ENCODE measurements at regions of chr19 and their contacts with region 1.

Region 1: GRCh38 chr19:50777754-50778303 is 7.6 kb downstream of the GPR32 start:
- DNase-seq: no peak
- H3K4me3 Mint-ChIP-seq: no peak overlapping the region
- H3K27ac Mint-ChIP-seq: no peak overlapping the region
- H3K4me1 Mint-ChIP-seq: peaks cover 3% of the 10 kb centered on the region
- H3K27me3 Mint-ChIP-seq: peaks cover 57% of the 10 kb centered on the region

Region 2: GRCh38 chr19:49786376-49786820 is 991.4 kb before region 1 on chr19:
- CTCF ChIA-PET with region 1: no interaction called
- intact Hi-C with region 1: no loop called
- DNase-seq: no peak
- H3K4me3 Mint-ChIP-seq: no peak overlapping the region
- H3K27ac Mint-ChIP-seq: no peak overlapping the region
- H3K4me1 Mint-ChIP-seq: no peaks in the 10 kb centered on the region
- H3K27me3 Mint-ChIP-seq: no peaks in the 10 kb centered on the region

Region 3: GRCh38 chr19:50368649-50369570 is 408.9 kb before region 1 on chr19:
- CTCF ChIA-PET with region 1: no interaction called
- intact Hi-C with region 1: loop called (anchors 1 kb)
- DNase-seq: peak; percentile 89
- H3K4me3 Mint-ChIP-seq: peak overlapping the region; percentile 88
- H3K27ac Mint-ChIP-seq: peak overlapping the region; percentile 88
- H3K4me1 Mint-ChIP-seq: peaks cover 35% of the 10 kb centered on the region
- H3K27me3 Mint-ChIP-seq: no peaks in the 10 kb centered on the region

Region 4: DNA sequence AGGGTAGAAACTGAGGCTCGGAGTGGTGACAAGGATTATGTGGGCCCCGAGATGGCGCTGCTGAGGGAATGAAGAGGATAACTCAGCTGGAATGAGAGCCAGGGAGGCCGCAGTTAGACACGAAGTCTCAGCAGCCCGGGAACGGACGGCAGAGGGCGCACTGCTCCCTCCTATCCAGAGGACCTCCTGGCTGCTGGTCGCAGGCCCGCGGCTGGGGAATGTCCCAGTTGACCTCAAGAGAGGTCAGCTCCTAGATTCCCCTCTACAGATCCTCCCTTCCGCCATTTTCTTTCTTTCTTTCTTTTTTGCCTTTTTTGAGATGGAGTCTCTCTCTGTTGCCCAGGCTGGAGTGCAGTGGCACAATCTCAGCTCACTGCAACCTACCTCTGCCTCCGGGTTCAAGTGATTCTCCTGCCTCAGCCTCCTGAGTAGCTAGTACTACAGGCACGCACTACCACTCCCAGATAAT is 240.0 kb before region 1 on chr19:
- CTCF ChIA-PET with region 1: interaction called, 13 read pairs
- intact Hi-C with region 1: loop called (anchors 1 kb)
- DNase-seq: peak; percentile 84
- H3K4me3 Mint-ChIP-seq: no peak overlapping the region
- H3K27ac Mint-ChIP-seq: peak overlapping the region; percentile 61
- H3K4me1 Mint-ChIP-seq: peaks cover 5% of the 10 kb centered on the region
- H3K27me3 Mint-ChIP-seq: peaks cover 15% of the 10 kb centered on the region

Region 5: DNA sequence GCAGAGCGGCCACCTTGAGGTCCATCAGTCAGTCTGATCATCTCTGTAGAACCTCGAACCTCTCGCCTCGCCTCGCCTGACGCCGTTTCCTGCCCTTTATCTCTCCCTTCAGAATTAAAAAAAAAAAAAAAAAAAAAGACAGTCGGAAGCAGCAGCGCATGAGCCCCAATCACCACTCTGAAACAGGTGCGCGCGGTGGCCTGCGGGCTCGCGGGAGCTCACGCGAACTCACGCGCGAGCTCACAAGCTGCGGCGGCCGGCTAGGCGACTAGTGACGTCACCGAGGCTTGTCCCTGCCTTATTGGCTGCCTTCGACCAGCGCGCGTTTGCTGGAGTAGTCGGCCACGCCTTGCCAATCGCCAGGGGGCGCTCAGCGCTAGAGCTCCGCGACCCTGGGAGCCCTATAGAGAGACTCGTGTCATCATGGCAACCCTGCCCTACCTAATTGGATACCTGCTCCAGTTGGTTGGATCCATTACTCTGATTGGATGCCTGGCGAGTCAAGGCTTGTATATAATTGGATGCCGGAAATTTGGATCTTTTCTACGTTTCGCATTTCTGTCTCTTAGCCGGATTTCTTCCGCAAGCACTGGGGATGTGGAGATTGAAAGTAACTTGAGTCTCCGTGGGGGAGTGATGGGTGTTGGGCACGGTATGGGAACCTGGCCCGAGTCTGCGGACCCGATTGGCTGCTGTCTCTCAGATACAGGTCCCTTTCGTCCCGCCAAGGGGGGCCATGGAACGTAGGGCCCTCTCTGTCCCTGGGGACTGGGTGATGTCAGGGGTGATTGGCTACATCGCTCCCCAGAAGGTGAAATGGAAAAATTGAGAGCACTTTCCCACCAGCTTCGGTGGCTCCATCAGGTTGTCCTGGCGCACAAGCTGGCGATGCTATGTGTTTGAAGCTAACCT is 169.7 kb before region 1 on chr19:
- CTCF ChIA-PET with region 1: no interaction called
- intact Hi-C with region 1: loop called (anchors 2 kb)
- DNase-seq: peak; percentile 91
- H3K4me3 Mint-ChIP-seq: no peak overlapping the region
- H3K27ac Mint-ChIP-seq: no peak overlapping the region
- H3K4me1 Mint-ChIP-seq: peaks cover 10% of the 10 kb centered on the region
- H3K27me3 Mint-ChIP-seq: peaks cover 32% of the 10 kb centered on the region

Region 6: DNA sequence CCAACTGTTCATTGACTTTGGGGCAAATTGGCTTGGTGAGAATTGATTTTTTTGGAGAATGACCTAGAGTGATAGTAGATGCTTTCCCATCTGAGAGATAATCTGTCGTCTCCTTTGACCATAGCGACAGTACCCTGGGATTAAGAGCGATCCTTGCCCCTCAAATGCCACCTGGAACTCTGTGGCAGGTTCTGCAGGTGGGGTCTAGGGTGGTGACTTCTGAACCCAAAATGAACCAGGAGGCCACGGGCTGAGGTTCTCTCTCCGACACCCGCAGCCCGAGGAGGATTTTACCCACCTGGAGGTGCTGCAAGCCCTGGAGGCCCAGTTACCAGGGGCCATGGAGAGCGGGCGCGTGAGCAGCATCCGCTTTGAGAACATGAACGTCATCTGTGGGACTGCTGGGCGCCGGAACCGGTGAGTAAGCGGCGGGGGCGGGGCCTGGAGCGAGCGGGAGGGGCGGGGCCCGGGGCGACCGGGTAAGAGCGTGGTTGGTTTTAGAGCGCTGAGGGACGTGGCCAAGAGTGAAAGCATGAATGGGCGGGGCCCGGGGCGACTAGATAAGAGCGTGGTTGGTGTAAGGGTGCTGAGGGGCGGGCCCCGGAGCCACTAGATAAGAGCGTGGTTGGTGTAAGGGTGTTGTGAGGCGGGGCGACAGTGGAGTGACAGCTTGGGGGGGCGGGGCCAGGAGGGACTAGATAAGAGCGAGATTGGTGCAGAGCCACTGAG is 120.0 kb before region 1 on chr19:
- CTCF ChIA-PET with region 1: no interaction called
- intact Hi-C with region 1: no loop called
- DNase-seq: peak; percentile 96
- H3K4me3 Mint-ChIP-seq: peak overlapping the region; percentile 81
- H3K27ac Mint-ChIP-seq: peak overlapping the region; percentile 73
- H3K4me1 Mint-ChIP-seq: peaks cover 19% of the 10 kb centered on the region
- H3K27me3 Mint-ChIP-seq: peaks cover 73% of the 10 kb centered on the region

Region 7: GRCh38 chr19:50705422-50706019 is 72.3 kb before region 1 on chr19:
- CTCF ChIA-PET with region 1: no interaction called
- intact Hi-C with region 1: loop called (anchors 1 kb)
- DNase-seq: peak; percentile 58
- H3K4me3 Mint-ChIP-seq: no peak overlapping the region
- H3K27ac Mint-ChIP-seq: no peak overlapping the region
- H3K4me1 Mint-ChIP-seq: no peaks in the 10 kb centered on the region
- H3K27me3 Mint-ChIP-seq: peaks cover 36% of the 10 kb centered on the region

Region 8: DNA sequence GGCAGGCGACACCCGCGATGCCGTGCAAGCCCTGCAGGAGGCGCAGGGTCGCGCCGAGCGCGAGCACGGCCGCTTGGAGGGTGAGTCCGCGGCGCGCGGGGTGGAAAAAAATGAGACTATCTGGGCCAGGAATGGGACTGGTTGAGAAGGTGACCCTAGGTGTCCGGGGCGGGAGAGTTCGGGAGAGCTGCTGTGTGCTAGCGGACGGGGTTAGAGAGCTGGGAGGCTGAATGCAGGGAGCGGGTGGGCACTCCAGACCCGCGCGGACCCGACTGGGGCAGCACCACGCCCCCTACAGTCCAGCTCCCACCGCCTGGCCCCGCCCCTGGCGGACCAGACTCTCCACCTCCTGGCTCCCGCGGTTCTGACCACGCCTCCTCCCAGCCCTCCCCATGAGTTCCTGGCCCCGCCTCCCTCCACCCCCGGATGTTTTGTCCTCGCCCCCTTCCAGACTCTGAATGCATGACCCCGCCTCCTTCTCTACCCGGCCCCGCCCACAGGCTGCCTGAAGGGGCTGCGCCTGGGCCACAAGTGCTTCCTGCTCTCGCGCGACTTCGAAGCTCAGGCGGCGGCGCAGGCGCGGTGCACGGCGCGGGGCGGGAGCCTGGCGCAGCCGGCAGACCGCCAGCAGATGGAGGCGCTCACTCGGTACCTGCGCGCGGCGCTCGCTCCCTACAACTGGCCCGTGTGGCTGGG is 53.2 kb before region 1 on chr19:
- CTCF ChIA-PET with region 1: interaction called, 3 read pairs
- intact Hi-C with region 1: loop called (anchors 5 kb)
- DNase-seq: peak; percentile 99
- H3K4me3 Mint-ChIP-seq: peak overlapping the region; percentile 74
- H3K27ac Mint-ChIP-seq: no peak overlapping the region
- H3K4me1 Mint-ChIP-seq: peaks cover 27% of the 10 kb centered on the region
- H3K27me3 Mint-ChIP-seq: peaks cover 51% of the 10 kb centered on the region